AG04450 (cell line): ENCODE measurements at regions of chr10 and their contacts with region 1.

Region 1: DNA sequence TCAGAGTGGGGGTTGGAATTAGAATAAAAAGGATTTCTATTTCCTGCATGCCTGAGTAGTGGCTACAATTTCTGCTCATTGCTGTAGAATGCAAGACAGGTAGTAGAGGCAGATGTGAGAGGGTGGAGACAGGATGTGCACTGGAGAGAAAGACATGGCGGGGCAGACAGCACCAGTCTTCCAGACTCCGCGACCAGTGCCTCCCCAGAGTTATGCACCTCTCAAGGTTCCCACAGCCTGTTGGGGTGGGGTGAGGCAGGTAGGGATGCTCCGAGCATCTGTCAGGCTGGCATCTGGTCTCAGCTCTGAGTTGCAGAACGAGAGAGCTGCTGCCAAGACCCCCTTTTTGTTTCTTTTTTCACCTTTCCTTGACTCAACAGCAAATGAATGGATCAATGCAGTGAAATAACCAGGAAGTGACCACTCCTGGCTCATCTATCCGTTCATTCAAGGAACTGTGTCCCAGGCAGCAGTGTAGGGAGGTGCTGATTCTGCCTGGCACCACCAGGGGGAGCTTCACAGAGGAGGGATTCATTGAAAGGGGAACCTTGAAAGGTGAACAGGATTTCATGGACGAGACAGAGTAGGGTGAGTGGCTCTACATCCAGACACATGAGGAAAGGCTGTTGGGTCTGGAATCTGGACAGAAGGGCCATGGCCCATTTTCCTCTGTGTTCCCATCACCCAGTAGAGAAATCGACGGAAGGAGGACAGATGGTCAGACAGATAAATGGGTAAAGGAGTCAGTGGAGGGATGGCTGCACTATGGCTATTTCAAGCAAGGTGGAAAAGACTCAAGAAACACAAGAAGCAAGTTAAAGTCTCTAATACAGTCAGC is 17.2 kb upstream of the SLC18A3 start:
- DNase-seq: peak; percentile 10
- H3K4me3 ChIP-seq: no peak overlapping the region
- H3K27ac ChIP-seq: no peak overlapping the region
- H3K27me3 ChIP-seq: peaks cover 3% of the 10 kb centered on the region
- CTCF ChIP-seq: peak; percentile 98

Region 2: GRCh38 chr10:49577182-49577925 is 15.6 kb before region 1 on chr10:
- CTCF ChIA-PET with region 1: interaction called, 10 read pairs
- POLR2A ChIA-PET with region 1: no interaction called
- DNase-seq: no peak
- H3K4me3 ChIP-seq: no peak overlapping the region
- H3K27ac ChIP-seq: no peak overlapping the region
- H3K27me3 ChIP-seq: no peaks in the 10 kb centered on the region
- CTCF ChIP-seq: no peak

Region 3: GRCh38 chr10:49606981-49607535 is 14.1 kb after region 1 on chr10:
- CTCF ChIA-PET with region 1: interaction called, 10 read pairs
- POLR2A ChIA-PET with region 1: no interaction called
- DNase-seq: peak; percentile 11
- H3K4me3 ChIP-seq: no peak overlapping the region
- H3K27ac ChIP-seq: no peak overlapping the region
- H3K27me3 ChIP-seq: peaks cover 45% of the 10 kb centered on the region
- CTCF ChIP-seq: no peak